ENCODE measurements at regions of chr20 and their contacts with region 1.

Region 1: DNA sequence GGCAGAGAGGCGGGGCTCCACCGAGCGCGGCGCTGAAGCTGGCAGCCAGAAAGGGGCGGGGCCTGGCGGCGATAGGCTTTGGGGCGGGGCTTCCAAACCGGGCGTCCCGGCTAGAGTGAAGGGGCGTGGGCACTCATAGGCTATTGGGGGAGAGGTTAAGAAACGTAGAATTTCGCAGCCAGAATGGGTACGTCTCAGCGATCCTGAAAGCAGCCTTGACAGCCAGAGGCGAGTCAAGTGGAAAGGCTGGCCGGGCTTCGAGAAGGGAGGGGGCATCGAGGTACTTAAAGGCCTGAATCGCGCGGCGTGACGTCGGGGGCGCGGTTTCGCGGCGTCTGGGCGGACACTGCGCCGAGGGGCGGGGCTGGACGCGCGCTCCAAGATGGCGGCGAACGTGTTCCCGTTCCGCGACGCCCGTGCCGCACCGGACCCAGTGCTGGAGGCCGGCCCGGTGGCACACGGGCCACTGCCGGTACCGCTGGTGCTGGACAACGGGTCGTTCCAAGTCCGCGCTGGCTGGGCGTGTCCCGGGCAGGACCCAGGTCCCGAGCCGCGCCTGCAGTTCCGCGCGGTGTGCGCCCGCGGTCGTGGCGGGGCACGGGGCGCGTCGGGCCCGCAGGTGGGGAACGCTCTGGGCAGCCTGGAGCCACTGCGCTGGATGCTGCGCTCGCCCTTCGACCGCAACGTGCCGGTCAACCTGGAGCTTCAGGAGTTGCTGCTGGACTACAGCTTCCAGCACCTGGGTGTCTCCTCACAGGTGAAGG is at the start of gene ACTR5:
- DNase-seq: peak; percentile 99
- CTCF ChIP-seq: no peak

Region 2: DNA sequence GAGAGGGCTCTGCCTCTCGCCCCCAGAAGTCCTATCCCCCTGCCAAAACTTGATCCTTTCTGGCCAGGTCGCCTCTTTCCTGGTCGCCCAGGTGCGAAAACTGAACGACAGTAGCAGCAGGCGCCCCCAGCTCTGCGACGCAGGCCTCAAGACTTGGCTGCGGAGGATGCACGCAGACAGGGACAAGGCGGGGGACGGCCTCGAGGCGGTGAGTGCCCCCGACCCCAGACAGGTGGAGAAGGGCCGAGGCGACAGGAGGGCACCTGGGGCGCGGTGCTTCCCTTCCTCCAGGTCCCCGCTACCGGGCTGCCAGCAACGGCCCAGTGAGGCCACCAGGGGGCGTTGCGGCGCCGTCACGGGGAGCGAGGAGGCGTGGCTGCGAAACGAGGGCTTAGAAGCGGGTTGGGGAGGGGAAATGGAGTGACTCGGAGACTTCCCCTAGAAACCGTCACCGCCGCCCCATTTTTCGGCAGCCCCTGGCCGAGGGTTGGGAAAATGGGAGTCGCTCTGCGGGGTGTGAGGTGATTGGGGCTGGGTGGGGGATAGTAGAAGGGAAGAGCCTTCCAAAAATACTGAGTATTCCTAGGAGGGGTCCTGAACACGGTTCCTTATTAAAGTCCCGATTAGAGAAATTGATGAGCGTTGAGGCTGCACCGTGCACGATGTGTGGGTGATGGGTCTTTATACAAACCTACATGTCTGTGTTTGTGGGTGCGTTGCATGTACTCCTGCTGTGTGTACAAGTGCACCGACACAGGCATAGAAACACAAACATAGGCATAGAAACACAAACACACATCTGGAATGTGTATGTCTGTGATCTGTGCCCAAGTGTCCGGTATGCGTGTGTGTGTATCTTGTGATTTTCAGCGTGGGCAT is 102.1 kb before region 1 on chr20:
- CTCF ChIA-PET with region 1: interaction called, 39 read pairs
- POLR2A ChIA-PET with region 1: no interaction called
- DNase-seq: peak; percentile 92
- CTCF ChIP-seq: peak; percentile 99

Region 3: DNA sequence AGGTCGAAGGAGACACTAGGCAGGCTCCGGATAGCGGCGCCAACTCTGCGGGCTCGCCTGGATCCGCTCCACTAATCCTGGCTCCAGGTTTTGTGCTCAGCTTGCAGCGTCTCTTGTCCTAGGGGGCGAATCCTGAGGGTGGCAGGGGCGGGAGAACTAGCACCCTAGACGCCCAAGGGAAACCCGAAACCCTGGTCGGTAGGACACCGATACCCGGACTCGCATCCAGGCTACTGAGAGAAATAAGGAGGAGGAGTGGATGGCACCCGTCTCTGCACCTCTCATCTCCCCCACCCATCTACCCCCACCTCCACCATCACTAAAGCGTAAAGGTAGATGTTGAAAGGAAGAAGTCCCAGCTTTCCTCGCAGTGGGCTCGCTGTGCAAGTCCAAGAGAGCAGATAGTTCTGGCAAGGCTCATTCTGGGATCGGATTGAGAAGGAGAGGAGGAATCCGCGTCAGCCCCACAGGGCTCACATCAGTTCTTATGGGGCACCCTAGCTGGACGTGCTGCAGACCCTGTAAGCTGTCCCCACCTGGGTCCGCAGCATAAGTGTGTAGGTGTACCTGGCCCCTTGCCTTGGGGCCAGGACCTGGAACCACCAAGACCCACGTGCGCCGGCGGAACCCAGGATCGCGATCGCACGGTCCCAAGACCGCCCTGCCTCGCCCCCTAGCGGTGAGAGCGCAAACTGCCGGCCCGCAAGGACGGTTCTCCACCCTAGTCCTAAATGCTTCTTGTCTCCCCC is 17.1 kb before region 1 on chr20:
- CTCF ChIA-PET with region 1: interaction called, 14 read pairs
- POLR2A ChIA-PET with region 1: no interaction called
- DNase-seq: peak; percentile 82
- CTCF ChIP-seq: peak; percentile 96

Region 4: GRCh38 chr20:38764567-38765355 is 16.5 kb after region 1 on chr20:
- CTCF ChIA-PET with region 1: interaction called, 32 read pairs
- POLR2A ChIA-PET with region 1: no interaction called
- DNase-seq: no peak
- CTCF ChIP-seq: no peak

Region 5: GRCh38 chr20:38770546-38770945 is 22.3 kb after region 1 on chr20:
- CTCF ChIA-PET with region 1: interaction called, 19 read pairs
- POLR2A ChIA-PET with region 1: no interaction called
- DNase-seq: no peak
- CTCF ChIP-seq: no peak

Region 6: GRCh38 chr20:38790200-38791053 is 42.1 kb after region 1 on chr20:
- CTCF ChIA-PET with region 1: interaction called, 10 read pairs
- POLR2A ChIA-PET with region 1: no interaction called
- DNase-seq: no peak
- CTCF ChIP-seq: peak; percentile 58

Measured in GM10248 (cell line).